ENCODE measurements at regions of chr10 and their contacts with region 1.

Region 1: DNA sequence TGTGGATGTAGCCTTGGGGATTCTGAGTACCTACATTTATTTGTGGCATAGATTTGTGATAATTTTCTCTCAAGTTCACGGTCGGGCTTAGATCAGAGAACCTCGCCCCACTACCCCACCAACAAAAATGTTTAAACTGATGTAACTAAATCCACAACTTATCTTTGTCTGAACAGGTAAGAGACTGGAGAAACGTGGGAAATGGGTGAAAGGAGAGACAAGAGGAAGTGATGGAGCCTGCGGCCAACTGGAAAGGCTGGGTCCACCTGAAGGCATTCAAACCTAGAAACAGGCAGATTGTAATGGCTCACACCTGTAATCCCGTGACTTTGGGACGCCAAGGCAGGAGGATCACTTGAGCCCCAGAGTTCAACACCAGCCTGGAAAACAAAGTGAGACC is 58.3 kb upstream of the PTER start:
- DNase-seq: no peak
- H3K4me3 Mint-ChIP-seq: no peak overlapping the region
- H3K27ac Mint-ChIP-seq: no peak overlapping the region
- H3K4me1 Mint-ChIP-seq: peaks cover 6% of the 10 kb centered on the region
- H3K27me3 Mint-ChIP-seq: peaks cover 7% of the 10 kb centered on the region
- CTCF ChIP-seq: no peak

Region 2: GRCh38 chr10:15852111-15852557 is 526.4 kb before region 1 on chr10:
- CTCF ChIA-PET with region 1: no interaction called
- POLR2A ChIA-PET with region 1: no interaction called
- intact Hi-C with region 1: loop called (anchors 5 kb)
- DNase-seq: no peak
- H3K4me3 Mint-ChIP-seq: no peak overlapping the region
- H3K27ac Mint-ChIP-seq: no peak overlapping the region
- H3K4me1 Mint-ChIP-seq: peaks cover 10% of the 10 kb centered on the region
- H3K27me3 Mint-ChIP-seq: no peaks in the 10 kb centered on the region
- CTCF ChIP-seq: no peak